ENCODE measurements at regions of chr14 and their contacts with region 1.

Region 1: DNA sequence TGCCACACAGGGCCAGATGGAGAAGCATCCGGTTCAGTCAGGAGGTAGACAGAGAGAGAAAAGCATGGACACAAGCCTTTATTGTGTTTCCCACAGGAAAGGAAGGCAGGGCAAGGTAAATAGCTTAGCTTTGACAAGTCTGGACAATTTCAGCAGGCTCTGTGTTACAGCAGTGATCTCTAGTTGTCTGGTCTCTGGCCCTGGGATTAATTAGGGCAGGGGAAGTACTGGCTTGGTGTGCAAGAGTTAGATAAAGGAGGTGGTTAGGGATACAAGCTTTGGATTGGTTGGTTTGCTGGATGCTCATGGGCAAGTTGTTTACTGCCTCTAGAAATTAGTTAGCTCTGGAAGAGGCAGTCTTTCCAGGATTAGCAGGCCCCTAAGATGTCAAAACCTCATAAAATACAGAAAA is 15.1 kb upstream of the NGDN start:
- DNase-seq: no peak

Region 2: GRCh38 chr14:23269193-23269592 is 185.3 kb before region 1 on chr14:
- intact Hi-C with region 1: loop called (anchors 10 kb)
- DNase-seq: no peak

Measured in posterior cingulate gyrus (tissue), 11 donors.